ENCODE measurements at regions of chr14 and their contacts with region 1.

Region 1: GRCh38 chr14:100192672-100193416 is 33.4 kb upstream of the DEGS2 start:
- DNase-seq: peak; percentile 99
- H3K4me3 Mint-ChIP-seq: peak overlapping the region; percentile 70
- H3K27ac Mint-ChIP-seq: peak overlapping the region; percentile 89
- H3K4me1 Mint-ChIP-seq: peaks cover 11% of the 10 kb centered on the region
- H3K27me3 Mint-ChIP-seq: no peaks in the 10 kb centered on the region
- CTCF ChIP-seq: peak; percentile 71

Region 2: DNA sequence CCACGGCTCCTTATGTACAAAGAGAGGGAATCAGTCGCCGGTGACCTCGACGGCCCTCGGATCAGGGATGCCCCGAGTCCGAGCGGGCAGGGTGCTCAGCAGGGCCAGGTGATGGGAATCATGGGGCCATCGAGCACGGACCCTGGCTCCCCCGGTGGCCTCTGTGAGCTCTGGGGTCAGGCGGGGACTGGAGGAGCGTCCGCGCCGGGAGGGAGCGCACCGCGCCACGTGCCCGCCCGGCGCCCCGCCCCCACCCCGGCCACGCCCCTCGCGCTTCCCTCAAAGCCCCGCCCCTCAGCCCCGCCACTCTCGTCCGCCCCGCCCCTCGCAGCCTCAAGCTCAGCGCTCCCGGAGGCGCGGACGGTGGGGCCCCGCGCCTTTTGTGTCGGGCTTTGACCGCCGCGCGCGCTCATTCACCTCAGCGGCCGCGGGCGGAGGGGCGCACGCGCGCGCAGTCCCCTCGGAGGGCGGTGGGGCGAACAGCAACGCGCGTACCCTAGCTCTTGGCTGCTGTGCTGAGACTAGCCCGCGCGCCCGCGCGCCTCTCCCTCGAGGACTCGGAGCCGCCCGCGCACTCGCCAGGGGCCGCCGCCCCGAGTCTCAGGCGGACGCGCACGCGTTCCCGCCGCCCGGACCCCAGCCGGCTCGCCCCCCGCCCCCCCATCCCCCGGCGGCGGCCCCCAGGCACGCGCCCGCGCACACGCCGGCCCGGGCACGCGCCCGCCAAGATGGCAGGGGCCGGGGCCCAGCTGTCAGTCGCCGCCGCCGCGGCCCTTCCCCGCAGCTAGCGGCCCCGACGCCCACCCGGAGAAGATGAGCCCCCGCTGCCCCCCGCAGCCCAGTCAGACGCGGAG is 221.5 kb before region 1 on chr14:
- CTCF ChIA-PET with region 1: interaction called, 15 read pairs
- POLR2A ChIA-PET with region 1: interaction called, 6 read pairs
- intact Hi-C with region 1: no loop called
- DNase-seq: peak; percentile 84
- H3K4me3 Mint-ChIP-seq: peak overlapping the region; percentile 91
- H3K27ac Mint-ChIP-seq: no peak overlapping the region
- H3K4me1 Mint-ChIP-seq: peaks cover 7% of the 10 kb centered on the region
- H3K27me3 Mint-ChIP-seq: no peaks in the 10 kb centered on the region
- CTCF ChIP-seq: no peak

Region 3: GRCh38 chr14:100067971-100068959 is 124.6 kb before region 1 on chr14:
- CTCF ChIA-PET with region 1: interaction called, 68 read pairs
- POLR2A ChIA-PET with region 1: interaction called, 6 read pairs
- intact Hi-C with region 1: loop called (anchors 1 kb)
- DNase-seq: peak; percentile 73
- H3K4me3 Mint-ChIP-seq: no peak overlapping the region
- H3K27ac Mint-ChIP-seq: peak overlapping the region; percentile 78
- H3K4me1 Mint-ChIP-seq: peaks cover 29% of the 10 kb centered on the region
- H3K27me3 Mint-ChIP-seq: no peaks in the 10 kb centered on the region
- CTCF ChIP-seq: no peak

Region 4: GRCh38 chr14:100108042-100108825 is 84.6 kb before region 1 on chr14:
- CTCF ChIA-PET with region 1: interaction called, 16 read pairs
- POLR2A ChIA-PET with region 1: interaction called, 3 read pairs
- intact Hi-C with region 1: loop called (anchors 2 kb)
- DNase-seq: peak; percentile 81
- H3K4me3 Mint-ChIP-seq: peak overlapping the region; percentile 18
- H3K27ac Mint-ChIP-seq: peak overlapping the region; percentile 70
- H3K4me1 Mint-ChIP-seq: peaks cover 41% of the 10 kb centered on the region
- H3K27me3 Mint-ChIP-seq: no peaks in the 10 kb centered on the region
- CTCF ChIP-seq: peak; percentile 89

Region 5: GRCh38 chr14:100221533-100222223 is 28.8 kb after region 1 on chr14:
- CTCF ChIA-PET with region 1: interaction called, 10 read pairs
- POLR2A ChIA-PET with region 1: interaction called, 3 read pairs
- intact Hi-C with region 1: no loop called
- DNase-seq: peak; percentile 35
- H3K4me3 Mint-ChIP-seq: no peak overlapping the region
- H3K27ac Mint-ChIP-seq: no peak overlapping the region
- H3K4me1 Mint-ChIP-seq: no peaks in the 10 kb centered on the region
- H3K27me3 Mint-ChIP-seq: no peaks in the 10 kb centered on the region
- CTCF ChIP-seq: no peak

Region 6: GRCh38 chr14:100246826-100247428 is 54.1 kb after region 1 on chr14:
- CTCF ChIA-PET with region 1: interaction called, 12 read pairs
- POLR2A ChIA-PET with region 1: no interaction called
- intact Hi-C with region 1: no loop called
- DNase-seq: peak; percentile 77
- H3K4me3 Mint-ChIP-seq: no peak overlapping the region
- H3K27ac Mint-ChIP-seq: no peak overlapping the region
- H3K4me1 Mint-ChIP-seq: peaks cover 26% of the 10 kb centered on the region
- H3K27me3 Mint-ChIP-seq: no peaks in the 10 kb centered on the region
- CTCF ChIP-seq: peak; percentile 44

Measured in MCF 10A (cell line).